ENCODE measurements at regions of chr19 and their contacts with region 1.

Region 1: DNA sequence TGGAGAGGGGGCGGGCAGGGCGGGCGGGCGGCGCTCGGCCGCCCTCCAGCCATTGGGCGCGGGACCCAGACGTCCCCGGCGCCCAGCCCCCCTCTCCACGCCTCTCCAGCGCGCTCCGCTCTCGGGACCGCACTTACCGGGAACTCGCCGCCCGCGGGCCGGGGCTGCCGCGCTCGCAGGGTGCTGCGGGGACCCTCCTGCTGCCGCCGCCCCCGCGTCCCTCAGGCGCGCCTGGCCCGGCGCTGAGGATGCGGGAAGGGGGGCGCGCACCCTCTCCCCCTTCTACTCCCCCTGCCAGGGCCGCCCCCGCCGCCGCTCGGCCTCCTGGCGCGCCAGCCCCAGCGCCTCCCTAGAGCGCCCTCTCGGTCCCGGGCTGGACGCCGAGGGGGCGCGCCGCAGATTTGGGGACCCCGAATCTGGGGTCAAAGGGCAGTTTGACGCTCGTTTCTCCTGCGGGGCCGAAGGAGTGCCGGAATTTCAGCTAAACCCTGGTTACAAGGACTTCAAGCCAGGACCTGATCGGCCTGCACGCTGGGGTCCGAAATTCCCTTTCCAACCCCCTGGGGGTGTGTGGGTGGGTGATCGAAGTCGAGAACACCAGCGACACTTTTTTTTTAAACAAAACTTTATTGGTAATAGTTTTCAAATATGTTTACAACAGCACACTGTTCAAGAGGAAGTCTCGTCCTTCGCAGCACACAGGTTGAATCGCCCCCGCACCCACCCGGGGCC is 696 bp upstream of the SAMD1 start:
- H3K4me3 Mint-ChIP-seq: peak overlapping the region; percentile 94
- H3K27ac Mint-ChIP-seq: peak overlapping the region; percentile 96
- H3K4me1 Mint-ChIP-seq: peaks cover 27% of the 10 kb centered on the region
- H3K27me3 Mint-ChIP-seq: no peaks in the 10 kb centered on the region

Region 2: DNA sequence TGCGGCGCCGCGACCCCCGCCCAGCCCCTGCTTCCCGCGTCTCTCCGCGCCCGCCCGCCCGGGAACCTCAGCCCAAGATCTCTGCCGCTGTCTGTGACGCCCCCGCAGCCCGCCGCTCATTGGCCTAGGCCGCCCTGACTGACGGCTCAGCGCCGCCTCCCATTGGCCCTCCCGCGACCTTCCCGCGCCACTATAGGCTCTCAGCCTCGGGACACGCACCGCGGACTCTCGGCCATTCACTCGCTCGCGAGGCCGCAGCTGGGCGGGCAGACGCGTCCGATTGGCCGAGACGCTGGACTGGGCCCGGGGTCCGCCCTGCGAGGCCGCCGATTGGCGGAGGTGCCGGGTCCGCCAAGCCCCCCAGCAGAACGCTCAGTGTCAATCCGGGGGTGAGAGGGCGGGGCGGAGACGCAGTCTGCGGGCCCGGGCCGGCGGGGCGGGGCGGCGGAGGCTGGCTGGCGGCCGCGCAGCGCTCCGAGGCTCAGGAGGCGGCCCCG is 26.5 kb after region 1 on chr19 and contains the start of gene PRKACA:
- intact Hi-C with region 1: loop called (anchors 2 kb)
- H3K4me3 Mint-ChIP-seq: peak within 1 kb of the TSS; percentile 92
- H3K27ac Mint-ChIP-seq: peak within 1 kb of the TSS; percentile 93
- H3K4me1 Mint-ChIP-seq: peaks cover 68% of the 10 kb centered on the region
- H3K27me3 Mint-ChIP-seq: no peaks in the 10 kb centered on the region

Measured in dendritic cell treated with granulocyte-macrophage colony-stimulating factor and Interleukin-4, amounts not matched to agents 40 ng/mL and 50 ng/mL, for 4 days (primary cell).